H1 (cell line): ENCODE measurements at regions of chr12 and their contacts with region 1.

Region 1: GRCh38 chr12:120265473-120266179 is at the start of gene PXN:
- DNase-seq: peak in 1 of 2 experiments; percentile 97
- H3K4me3 ChIP-seq: peak within 1 kb of the TSS; percentile 65 to 85 (median 80)
- H3K27ac ChIP-seq: peak within 1 kb of the TSS; percentile 83
- H3K4me1 ChIP-seq: peaks cover 15 to 29% (median 19%) of the 10 kb centered on the region in 4 experiments
- H3K27me3 ChIP-seq: no peaks in the 10 kb centered on the region
- CTCF ChIP-seq: peak; percentile 79 to 91 (median 91)
- EP300 ChIP-seq: no peak
- POLR2A ChIP-seq: peak in 1 of 2 experiments; percentile 70; a peak in 2 of 3 replicates
- RAD21 ChIP-seq: peak; percentile 87 to 91
- total RNA-seq, gene PXN: 105 and 109 TPM in 2 replicates

Region 2: DNA sequence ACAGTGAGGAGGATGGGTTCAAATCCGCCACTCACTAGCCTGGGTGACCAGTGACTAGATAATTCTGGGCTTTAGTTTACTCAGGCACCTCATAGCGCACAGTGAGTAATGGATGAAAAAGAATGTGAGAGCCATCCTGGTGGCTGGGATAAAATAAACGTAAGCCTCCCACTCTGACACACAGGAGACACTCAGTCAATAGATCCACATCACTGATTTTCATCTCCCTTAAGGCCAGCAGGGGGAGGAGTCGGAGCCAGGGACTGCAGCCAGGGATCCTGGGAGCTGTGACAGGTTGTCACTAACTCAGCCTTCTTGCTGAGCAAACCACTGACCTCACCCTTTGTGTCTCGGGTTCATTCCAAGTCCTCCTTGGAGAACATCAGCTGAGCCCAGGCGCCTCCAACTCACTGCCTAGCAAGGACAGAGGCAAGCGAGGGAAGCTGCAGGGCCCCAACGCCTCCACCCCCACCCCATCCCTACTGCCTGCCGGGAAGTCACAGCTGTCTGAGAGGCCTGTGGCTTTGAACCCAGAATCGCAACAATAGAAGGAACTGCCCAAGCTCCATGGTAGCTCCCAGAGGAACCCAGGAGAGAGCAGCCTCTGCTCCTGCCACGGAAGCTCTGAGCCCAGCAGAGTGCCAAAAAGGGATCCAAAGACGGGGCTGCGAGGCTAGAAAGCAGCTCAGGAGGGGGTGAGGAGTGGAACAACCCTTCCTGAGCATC is 30.8 kb before region 1 on chr12:
- CTCF ChIA-PET with region 1: interaction called, 930 read pairs
- POLR2A ChIA-PET with region 1: interaction called, 4,270 read pairs
- DNase-seq: no peak
- H3K4me3 ChIP-seq: no peak overlapping the region
- H3K27ac ChIP-seq: no peak overlapping the region
- H3K4me1 ChIP-seq: peaks cover 34 to 57% (median 38%) of the 10 kb centered on the region in 4 experiments
- H3K27me3 ChIP-seq: no peaks in the 10 kb centered on the region
- CTCF ChIP-seq: peak; percentile 57 to 67 (median 57)
- EP300 ChIP-seq: no peak
- POLR2A ChIP-seq: no peak
- RAD21 ChIP-seq: peak; percentile 38 to 46; a peak in 3 of 4 replicates

Region 3: DNA sequence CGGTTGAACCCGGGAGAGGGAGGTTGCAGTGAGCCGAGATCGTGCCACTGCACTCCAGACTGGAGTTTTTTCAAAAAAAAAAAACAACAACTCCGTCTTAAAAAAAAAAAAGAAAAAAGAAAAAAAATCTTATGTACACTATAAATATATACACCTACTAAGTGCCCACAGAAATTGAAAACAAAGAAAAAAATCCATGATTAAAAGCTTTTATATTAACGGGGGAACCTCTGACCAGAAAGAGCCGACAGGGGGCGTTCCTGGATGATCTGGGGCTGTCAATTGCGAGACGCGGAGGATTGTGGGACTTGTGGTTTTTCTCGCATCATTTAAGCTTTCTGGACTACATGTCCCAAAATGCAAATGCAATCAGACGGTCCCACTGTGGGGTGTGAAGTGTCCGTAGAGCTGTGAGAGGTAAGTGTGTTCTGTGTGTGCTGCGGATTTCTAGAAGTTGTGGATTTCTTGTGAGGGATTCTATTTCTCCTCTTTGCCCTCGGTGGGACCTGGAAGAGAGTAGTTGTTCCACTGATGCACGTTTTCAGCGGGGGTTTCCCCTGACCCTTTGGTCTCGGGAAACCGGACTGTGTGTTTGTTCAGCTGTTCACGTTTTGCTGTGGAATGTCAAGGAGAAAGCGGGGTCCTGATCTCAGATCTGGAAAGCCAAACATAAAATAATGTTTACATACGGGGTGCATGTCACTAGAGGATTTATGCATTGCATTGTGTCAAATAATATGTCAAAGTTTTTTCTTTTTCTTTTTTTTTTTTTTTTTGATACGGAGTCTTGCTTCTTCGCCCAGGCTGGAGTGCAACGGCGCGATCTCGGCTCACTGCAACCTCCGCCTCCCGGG is 36.6 kb after region 1 on chr12 and contains the start of gene SIRT4:
- CTCF ChIA-PET with region 1: interaction called, 10 read pairs
- POLR2A ChIA-PET with region 1: interaction called, 4,270 read pairs
- DNase-seq: peak in 1 of 2 experiments; percentile 87
- H3K4me3 ChIP-seq: peak within 1 kb of the TSS; percentile 79 to 98 (median 88)
- H3K27ac ChIP-seq: peak within 1 kb of the TSS; percentile 84
- H3K4me1 ChIP-seq: no peaks in the 10 kb centered on the region
- H3K27me3 ChIP-seq: no peaks in the 10 kb centered on the region
- CTCF ChIP-seq: peak; percentile 68 to 81 (median 69)
- EP300 ChIP-seq: peak in 1 of 2 experiments; percentile 88; a peak in 1 of 3 replicates
- POLR2A ChIP-seq: no peak
- RAD21 ChIP-seq: peak in 1 of 2 experiments; percentile 26; a peak in 1 of 4 replicates
- total RNA-seq, gene SIRT4: 2.3 and 4.1 TPM in 2 replicates

Region 4: GRCh38 chr12:120352117-120352516 is 86.5 kb after region 1 on chr12:
- CTCF ChIA-PET with region 1: no interaction called
- POLR2A ChIA-PET with region 1: no interaction called
- DNase-seq: no peak
- H3K4me3 ChIP-seq: no peak overlapping the region
- H3K27ac ChIP-seq: no peak overlapping the region
- H3K4me1 ChIP-seq: no peaks in the 10 kb centered on the region
- H3K27me3 ChIP-seq: no peaks in the 10 kb centered on the region
- CTCF ChIP-seq: no peak
- EP300 ChIP-seq: no peak
- POLR2A ChIP-seq: no peak
- RAD21 ChIP-seq: no peak